ENCODE measurements at regions of chr12 and their contacts with region 1.

Region 1: DNA sequence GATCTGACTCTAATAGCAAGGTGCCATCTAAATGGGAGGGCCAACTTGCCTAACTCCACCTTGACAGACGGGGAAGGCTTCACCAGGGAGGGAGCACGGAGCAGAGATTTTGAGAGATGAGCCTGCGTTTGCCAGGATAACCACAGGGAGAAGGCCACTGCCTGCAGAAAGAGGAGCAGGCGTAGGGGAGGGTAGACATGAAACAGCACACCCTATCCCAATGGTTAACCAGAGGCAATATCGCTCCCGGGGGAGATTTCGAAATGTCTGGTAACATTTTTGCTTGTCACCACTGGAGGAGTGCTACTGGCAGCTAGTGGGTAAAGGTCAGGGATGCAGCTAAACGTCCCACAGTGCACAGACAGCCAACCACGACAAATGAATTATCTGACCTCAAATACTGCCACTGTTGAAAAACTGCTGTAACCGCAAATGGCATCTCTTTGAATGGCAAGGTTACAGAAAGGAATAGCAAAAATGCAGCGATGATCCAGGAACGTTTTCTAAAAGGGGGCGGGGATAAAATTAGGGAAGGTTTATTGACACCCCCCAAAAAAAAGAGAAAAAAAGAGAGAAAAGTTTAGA is 126.0 kb upstream of the ATF7IP start:
- DNase-seq: peak; percentile 76 to 91 (median 89)
- H3K4me3 ChIP-seq: peak overlapping the region in 6 of 7 experiments; percentile 9 to 75 (median 40)
- H3K27ac ChIP-seq: peak overlapping the region in 1 of 2 experiments; percentile 41
- H3K4me1 ChIP-seq: peaks cover 5 to 17% (median 13%) of the 10 kb centered on the region in 4 experiments
- H3K27me3 ChIP-seq: no peaks in the 10 kb centered on the region

Region 2: DNA sequence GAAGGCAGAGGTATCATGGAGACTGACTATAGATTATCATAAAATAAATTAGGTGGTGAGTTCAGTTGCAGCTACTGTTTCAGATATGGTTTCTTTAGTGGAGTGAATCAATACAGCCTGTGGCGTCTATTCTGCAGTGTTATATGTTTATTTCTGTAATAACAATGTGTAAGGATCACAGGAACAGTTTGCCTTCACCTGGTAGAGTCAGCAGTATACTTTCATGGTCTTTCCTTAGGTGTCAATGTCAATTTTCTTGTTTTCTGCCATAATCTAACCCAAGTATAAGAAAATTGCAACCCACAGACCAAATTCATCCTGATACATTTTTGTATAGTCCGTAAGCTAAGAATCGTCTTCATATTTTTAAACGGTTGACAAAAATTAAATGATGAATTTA is 14.4 kb before region 1 on chr12:
- CTCF ChIA-PET with region 1: interaction called, 10 read pairs
- POLR2A ChIA-PET with region 1: no interaction called
- DNase-seq: no peak
- H3K4me3 ChIP-seq: no peak overlapping the region
- H3K27ac ChIP-seq: no peak overlapping the region
- H3K4me1 ChIP-seq: no peaks in the 10 kb centered on the region
- H3K27me3 ChIP-seq: no peaks in the 10 kb centered on the region

Region 3: DNA sequence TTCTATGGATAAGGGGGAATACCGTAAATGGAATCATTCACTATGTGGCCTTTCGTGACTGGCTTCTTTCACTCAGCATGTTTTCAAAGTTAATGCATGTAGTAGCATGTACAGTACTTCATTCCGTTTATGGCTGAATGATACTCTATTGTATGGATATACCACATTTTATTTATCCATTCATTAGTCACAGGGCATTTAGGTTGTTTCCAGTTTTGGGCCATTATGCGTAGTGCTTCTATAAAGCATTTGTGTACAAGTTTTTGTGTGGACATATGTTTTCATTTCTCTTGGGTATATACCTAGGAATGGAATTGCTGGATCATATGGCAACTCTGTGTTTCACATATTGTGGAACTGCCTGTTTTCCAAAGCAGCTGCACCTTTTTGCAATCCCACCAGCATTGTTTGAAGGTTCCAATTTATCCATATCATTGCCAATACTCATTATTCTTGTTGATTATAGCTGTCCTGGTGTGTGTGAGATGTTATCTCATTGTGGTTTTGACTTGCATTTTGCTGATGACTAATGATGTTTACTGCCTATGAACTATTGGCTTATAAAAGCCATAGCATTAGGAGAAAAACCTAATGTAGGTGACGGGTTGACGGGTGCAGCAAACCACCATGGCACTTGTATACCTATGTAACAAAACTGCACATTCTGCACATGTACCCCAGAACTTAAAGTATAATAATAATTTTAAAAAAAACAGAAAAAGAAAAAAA is 171.6 kb after region 1 on chr12:
- CTCF ChIA-PET with region 1: interaction called, 13 read pairs
- POLR2A ChIA-PET with region 1: no interaction called
- DNase-seq: peak; percentile 53 to 89 (median 76)
- H3K4me3 ChIP-seq: peak overlapping the region in 2 of 7 experiments; percentile 33 to 48
- H3K27ac ChIP-seq: peak overlapping the region in 1 of 2 experiments; percentile 67
- H3K4me1 ChIP-seq: peaks cover 0 to 19% (median 0%) of the 10 kb centered on the region in 4 experiments
- H3K27me3 ChIP-seq: no peaks in the 10 kb centered on the region

Region 4: DNA sequence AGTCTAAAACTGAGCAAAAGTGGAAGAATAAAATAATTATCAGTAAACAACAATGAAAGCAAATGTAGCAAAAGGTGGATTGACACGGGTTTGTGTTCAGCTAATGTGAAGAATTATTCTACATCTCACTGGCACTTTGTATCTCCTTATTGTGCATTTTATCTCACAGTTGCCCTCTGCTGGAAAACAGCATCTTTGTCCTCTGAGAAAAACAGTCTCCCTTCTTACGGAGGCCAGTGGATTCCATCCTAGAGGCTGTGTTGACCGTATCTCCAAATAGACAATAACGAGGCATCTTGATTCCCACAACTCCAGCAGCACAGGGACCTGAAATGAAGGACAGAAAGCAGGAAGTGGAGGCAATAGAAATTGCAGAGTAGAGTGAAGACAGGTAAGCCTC is 379.5 kb after region 1 on chr12:
- CTCF ChIA-PET with region 1: interaction called, 20 read pairs
- POLR2A ChIA-PET with region 1: no interaction called
- DNase-seq: peak; percentile 31 to 53 (median 42)
- H3K4me3 ChIP-seq: no peak overlapping the region
- H3K27ac ChIP-seq: no peak overlapping the region
- H3K4me1 ChIP-seq: peaks cover 0 to 3% (median 1%) of the 10 kb centered on the region in 4 experiments
- H3K27me3 ChIP-seq: peaks cover 0 to 2% (median 0%) of the 10 kb centered on the region in 5 experiments

Measured in common myeloid progenitor, CD34-positive (primary cell).